ENCODE measurements at regions of chr17 and their contacts with region 1.

Region 1: DNA sequence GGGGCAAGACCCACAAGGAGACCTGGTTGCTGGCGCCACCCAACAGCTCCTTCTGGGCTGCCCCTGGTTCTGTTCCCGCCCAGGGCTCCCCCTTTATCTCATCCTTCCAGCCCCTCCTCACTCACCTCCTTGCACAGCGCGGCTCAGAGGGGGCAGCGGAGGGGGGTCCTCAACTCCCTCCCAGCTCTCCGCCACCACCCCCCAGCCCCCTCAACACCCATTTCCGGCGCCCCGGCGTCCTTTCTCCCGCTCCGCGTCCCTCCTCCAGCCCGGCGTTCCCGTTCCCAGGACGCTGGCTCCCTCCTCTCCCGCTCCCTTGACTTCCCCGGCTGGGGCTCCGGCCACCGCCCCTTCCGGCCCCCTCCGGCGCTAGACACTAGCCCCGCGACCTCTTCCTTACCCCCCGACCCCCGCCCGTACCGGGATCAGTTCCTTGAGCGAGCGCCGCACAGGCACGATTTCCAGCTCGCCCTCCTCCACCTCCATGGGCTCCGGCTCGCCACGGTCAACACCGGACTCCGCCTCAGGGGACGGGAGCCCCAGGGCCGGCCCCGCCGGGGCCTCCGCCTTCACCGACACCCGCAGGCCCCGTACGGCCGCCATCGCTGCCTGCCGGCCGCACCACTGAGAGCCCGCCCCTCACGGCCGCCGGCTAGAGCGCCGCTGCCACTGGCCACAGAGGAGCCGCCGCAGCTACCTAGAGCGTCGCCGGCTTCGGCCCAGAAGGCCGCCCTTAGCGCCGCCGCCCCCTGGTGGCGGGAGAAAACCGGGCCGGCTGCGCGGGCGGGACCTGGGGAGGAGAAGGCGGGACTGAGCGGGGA is at the start of gene NCBP3:
- DNase-seq: peak; percentile 93
- H3K4me3 ChIP-seq: peak within 1 kb of the TSS; percentile 75 to 97 (median 79)
- H3K27ac ChIP-seq: peak within 1 kb of the TSS; percentile 67
- H3K4me1 ChIP-seq: peaks cover 9% of the 10 kb centered on the region
- H3K27me3 ChIP-seq: no peaks in the 10 kb centered on the region
- CTCF ChIP-seq: peak; percentile 97
- POLR2A ChIP-seq: peak; percentile 87
- total RNA-seq, gene NCBP3: 51.1 and 52.2 TPM in 2 replicates

Region 2: GRCh38 chr17:3827124-3827773 is 18.6 kb before region 1 on chr17:
- CTCF ChIA-PET with region 1: interaction called, 14 read pairs
- POLR2A ChIA-PET with region 1: no interaction called
- dilution Hi-C with region 1: no loop called
- intact Hi-C with region 1: no loop called
- DNase-seq: peak; percentile 79
- H3K4me3 ChIP-seq: no peak overlapping the region
- H3K27ac ChIP-seq: no peak overlapping the region
- H3K4me1 ChIP-seq: no peaks in the 10 kb centered on the region
- H3K27me3 ChIP-seq: no peaks in the 10 kb centered on the region
- CTCF ChIP-seq: peak; percentile 64 to 71
- POLR2A ChIP-seq: no peak

Region 3: DNA sequence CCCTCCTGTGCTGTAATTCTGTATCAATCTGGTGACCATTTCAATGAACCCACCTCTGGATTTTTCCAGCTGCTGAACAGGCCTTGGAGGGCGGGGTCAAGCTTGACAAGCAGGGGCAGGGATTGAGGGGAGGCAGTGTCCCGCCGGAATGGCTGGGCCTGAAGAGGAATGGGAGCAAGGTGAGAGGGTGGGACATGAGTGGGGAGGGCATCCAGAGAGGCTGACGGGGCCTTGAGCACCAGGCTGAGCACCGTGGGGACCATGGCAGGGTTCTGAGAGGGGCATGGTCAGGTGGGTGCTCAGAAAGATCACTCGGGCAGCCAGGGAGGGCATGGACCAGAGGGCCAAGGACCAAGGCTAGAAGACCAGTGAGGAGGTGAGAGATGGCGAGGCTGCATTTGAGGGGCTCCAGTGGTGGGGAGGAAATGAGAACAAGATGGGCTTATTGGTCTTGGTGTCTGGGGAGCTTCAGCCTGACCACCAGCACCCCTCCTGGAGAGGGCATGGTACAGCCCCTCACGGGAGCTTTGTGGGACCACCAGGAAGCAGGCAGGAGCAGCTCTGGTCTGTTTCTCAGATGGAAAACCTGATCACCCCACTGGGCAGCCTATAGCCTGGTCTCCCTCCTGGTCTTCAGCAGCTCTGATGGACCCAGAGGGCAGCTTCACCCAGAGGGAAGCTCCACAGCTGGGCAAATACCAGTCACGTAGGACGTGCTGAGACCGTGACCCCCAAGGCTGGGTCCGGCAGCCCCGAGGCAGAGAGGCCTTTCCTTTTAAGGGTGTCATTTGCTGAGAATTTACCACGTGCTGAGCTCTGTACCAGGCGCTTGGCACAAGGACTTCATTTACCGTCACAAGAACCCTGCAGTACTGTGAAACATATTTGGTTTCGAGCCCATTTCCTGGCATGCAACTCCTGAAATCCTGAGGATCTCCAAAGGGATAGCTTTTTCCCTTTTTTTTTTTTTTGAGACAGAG is 11.6 kb after region 1 on chr17:
- CTCF ChIA-PET with region 1: interaction called, 10 read pairs
- POLR2A ChIA-PET with region 1: interaction called, 3 read pairs
- dilution Hi-C with region 1: no loop called
- intact Hi-C with region 1: no loop called
- DNase-seq: no peak
- H3K4me3 ChIP-seq: no peak overlapping the region
- H3K27ac ChIP-seq: no peak overlapping the region
- H3K4me1 ChIP-seq: no peaks in the 10 kb centered on the region
- H3K27me3 ChIP-seq: no peaks in the 10 kb centered on the region
- CTCF ChIP-seq: no peak
- POLR2A ChIP-seq: no peak

Region 4: DNA sequence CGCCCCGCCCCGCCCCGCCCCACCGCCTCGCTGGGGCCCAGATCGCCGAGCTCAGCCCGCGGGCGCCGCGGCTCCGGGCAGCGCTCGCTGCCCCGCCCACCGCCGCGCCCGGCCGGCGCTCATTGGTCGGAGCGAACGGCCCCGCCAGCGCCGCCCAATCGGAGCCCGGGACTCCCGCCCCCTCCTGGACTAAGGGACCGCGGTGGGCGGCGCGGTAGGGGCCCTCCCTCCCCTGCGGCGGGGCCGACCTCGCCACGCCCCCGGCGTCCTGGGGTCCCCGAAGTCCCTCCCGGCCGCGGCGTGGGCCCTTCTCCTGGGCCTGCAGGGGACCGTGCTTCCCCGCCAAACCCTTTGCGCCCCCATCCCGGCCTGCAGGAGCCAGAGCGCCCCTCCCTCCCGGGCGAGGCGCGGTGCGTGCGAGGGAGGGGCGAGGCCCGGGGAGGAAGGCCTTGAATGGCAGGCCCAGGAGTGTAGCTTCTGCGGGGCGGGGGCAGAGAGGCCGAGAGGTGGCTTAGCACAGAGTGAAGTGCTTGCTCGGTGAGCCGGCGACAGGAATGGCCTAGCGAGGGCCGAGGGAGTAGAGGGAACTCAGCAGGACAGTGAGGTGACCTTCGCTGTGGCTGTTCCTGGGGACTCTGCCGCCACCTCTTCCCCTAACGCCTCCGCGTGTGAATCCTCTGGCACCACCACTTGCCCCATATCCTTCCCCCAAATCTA is 47.3 kb after region 1 on chr17 and contains the start of gene CAMKK1:
- CTCF ChIA-PET with region 1: interaction called, 29 read pairs
- POLR2A ChIA-PET with region 1: no interaction called
- dilution Hi-C with region 1: no loop called
- intact Hi-C with region 1: loop called (anchors 1 kb)
- DNase-seq: peak; percentile 83
- H3K4me3 ChIP-seq: peak within 1 kb of the TSS; percentile 41 to 59 (median 52)
- H3K27ac ChIP-seq: no peak within 1 kb of the TSS
- H3K4me1 ChIP-seq: peaks cover 52% of the 10 kb centered on the region
- H3K27me3 ChIP-seq: no peaks in the 10 kb centered on the region
- CTCF ChIP-seq: no peak
- POLR2A ChIP-seq: no peak
- total RNA-seq, gene CAMKK1: 5.7 and 6.1 TPM in 2 replicates

Region 5: DNA sequence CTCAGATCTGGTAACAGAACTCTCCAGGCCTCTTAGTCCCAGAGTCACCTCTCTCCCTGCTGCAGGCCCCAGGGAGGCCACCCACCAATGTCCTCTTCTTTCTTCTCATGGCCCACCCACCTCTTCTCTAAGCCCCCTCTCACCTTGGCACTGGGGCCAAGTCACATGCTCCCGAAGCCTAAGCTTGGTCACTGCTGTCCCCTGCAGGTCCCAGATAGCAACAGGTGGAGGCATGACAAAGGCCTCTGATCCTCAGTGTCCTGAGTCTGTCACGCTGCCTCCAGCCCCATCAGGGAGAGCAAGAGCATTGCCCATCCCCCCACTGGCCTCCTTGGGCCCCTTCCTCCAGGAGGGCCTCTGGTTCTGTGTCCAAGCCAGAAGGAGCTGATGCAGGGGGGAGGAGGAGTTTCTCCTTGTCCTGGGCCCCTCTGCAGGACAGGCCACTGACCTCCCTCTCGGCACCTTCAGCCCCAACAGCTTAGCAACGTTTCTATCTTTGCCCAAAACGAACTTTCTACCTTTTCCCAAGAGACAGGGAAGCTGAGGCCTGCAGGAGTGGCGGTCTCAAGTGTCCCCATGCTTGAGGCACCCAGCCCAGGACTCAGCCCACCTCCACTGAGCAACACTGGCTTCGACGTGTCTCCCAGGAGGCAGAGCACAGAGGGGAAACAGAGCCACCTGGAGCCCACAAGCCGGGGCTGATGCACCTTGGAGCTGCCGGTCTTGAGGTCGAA is 61.8 kb after region 1 on chr17:
- CTCF ChIA-PET with region 1: interaction called, 18 read pairs
- POLR2A ChIA-PET with region 1: no interaction called
- dilution Hi-C with region 1: no loop called
- intact Hi-C with region 1: no loop called
- DNase-seq: no peak
- H3K4me3 ChIP-seq: no peak overlapping the region
- H3K27ac ChIP-seq: no peak overlapping the region
- H3K4me1 ChIP-seq: no peaks in the 10 kb centered on the region
- H3K27me3 ChIP-seq: no peaks in the 10 kb centered on the region
- CTCF ChIP-seq: peak; percentile 20 to 26
- POLR2A ChIP-seq: no peak